ENCODE measurements at regions of chr3 and their contacts with region 1.

Region 1: DNA sequence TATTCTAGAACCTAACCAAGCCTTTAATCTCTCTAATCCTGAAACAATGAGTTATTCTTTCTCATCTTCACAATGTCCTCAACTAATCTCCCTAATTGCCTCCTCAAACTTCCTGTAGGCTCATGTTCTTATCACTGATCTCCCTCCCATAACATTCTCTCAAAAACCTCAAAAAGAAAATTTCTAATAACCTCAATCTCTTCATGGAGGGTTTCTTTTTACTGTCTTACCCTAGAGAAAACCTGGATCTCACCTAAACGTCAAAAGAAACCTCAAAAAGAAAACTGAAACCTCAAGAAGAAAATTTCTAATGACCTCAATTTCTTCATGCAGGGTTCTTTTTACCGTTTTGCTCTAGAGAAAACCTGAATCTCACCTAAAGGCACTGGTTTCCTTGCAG is 150.2 kb downstream of the GSK3B start:
- DNase-seq: no peak
- H3K4me3 ChIP-seq: no peak overlapping the region
- CTCF ChIP-seq: no peak
- POLR2A ChIP-seq: no peak

Region 2: GRCh38 chr3:120013481-120013880 is 69.4 kb after region 1 on chr3:
- intact Hi-C with region 1: loop called (anchors 2 kb)
- DNase-seq: no peak
- H3K4me3 ChIP-seq: no peak overlapping the region
- CTCF ChIP-seq: no peak
- POLR2A ChIP-seq: no peak

Region 3: GRCh38 chr3:120214161-120214560 is 270.1 kb after region 1 on chr3:
- intact Hi-C with region 1: loop called (anchors 10 kb)
- DNase-seq: no peak
- H3K4me3 ChIP-seq: no peak overlapping the region
- CTCF ChIP-seq: no peak
- POLR2A ChIP-seq: no peak

Measured in lower leg skin (tissue), 4 donors.